ENCODE measurements at regions of chr15 and their contacts with region 1.

Region 1: DNA sequence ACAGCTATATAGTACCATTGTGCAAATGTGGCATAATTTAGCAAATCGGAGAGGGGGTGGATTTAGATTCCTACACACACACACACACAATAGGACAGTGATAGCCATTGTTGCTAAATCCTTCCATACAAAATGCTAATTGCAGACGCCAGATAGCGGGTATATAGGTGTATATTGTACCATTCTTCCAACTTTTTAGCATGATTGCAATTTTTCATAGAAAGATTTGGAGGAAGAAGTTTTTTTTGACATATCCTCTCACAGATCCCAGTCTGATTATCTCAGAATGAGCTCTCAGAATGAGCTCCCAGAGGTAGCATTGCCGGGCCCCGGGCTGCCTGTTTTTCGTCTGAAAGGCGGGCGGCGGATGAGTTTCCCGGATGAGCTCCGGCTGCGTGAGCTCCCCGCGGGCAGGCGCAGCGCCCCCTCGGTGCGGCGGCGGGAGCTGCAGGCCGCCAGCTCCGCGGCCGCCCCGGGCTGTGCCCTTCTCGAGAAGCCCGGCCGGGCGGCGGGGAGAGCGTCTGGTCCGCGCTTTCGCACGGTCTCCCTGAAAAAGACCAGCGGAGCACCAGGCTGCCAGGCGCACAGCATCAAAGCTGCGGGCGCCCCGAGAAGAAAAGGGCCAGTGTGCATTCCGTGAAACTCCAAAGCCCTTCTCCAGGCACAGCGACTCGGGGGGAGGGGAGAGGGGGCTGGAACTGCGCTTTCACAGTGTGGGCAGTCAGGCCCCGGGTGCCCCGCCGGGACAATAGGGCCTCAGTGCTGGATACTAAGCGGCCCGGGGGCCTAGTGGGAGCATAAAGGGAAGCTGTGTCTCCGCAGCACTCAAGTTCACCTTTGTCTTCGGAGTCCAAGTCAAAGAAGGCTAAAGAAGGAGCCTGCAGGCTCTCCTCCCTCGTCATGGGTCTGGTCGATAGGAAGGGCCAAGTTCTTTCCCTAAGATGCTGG is 12.0 kb upstream of the SHC4 start:
- DNase-seq: no peak
- H3K4me3 ChIP-seq: peak overlapping the region; percentile 57
- H3K27ac ChIP-seq: peak overlapping the region; percentile 21
- H3K27me3 ChIP-seq: no peaks in the 10 kb centered on the region
- CTCF ChIP-seq: peak; percentile 66

Region 2: GRCh38 chr15:48540756-48541155 is 435.0 kb before region 1 on chr15:
- CTCF ChIA-PET with region 1: no interaction called
- POLR2A ChIA-PET with region 1: no interaction called
- DNase-seq: no peak
- H3K4me3 ChIP-seq: no peak overlapping the region
- H3K27ac ChIP-seq: no peak overlapping the region
- H3K27me3 ChIP-seq: no peaks in the 10 kb centered on the region
- CTCF ChIP-seq: no peak

Region 3: DNA sequence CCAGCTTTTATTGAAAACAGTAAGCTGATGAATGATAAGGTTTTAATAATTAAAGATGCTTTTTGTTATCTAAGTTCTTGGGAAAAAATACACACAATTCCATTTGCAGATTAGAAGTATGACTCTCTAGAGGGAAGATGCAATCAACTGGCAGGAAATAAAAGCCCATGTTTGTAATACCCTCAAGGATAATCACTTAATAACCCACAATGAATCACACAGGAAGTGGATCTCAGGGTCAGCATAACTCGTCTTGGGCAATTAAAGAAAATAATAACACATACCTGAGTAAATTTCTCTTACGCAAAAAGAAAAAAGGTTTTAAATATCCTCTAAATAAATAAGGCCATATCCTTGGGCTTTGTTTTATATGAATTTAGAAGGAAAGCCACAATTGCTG is 107.2 kb before region 1 on chr15:
- CTCF ChIA-PET with region 1: interaction called, 102 read pairs
- POLR2A ChIA-PET with region 1: no interaction called
- DNase-seq: no peak
- H3K4me3 ChIP-seq: no peak overlapping the region
- H3K27ac ChIP-seq: no peak overlapping the region
- H3K27me3 ChIP-seq: no peaks in the 10 kb centered on the region
- CTCF ChIP-seq: no peak

Region 4: DNA sequence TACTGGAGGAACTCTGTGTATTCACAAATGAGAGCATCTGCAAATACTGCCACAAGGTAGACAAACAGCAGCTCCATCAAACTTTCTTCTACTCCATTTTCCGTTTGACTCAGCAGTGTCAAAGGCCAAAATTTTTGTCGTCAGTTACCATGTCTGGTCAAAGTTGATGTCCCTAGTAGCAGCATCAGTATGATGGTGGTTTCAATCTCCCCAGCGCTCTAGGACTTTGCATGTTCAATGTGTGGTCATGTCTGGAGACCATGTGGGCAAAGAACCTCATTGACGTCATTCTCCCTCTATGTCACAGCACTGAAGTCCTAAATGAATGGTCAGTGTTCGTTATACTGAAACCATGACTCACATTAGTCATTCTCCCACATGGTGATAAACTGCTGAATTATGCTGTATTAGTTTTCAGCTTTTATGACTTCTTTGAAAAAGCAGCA is 35.3 kb before region 1 on chr15:
- CTCF ChIA-PET with region 1: interaction called, 14 read pairs
- POLR2A ChIA-PET with region 1: interaction called, 4 read pairs
- DNase-seq: peak; percentile 92
- H3K4me3 ChIP-seq: no peak overlapping the region
- H3K27ac ChIP-seq: peak overlapping the region; percentile 77
- H3K27me3 ChIP-seq: no peaks in the 10 kb centered on the region
- CTCF ChIP-seq: no peak

Region 5: GRCh38 chr15:48992545-48992944 is 16.8 kb after region 1 on chr15:
- CTCF ChIA-PET with region 1: interaction called, 41 read pairs
- POLR2A ChIA-PET with region 1: no interaction called
- DNase-seq: no peak
- H3K4me3 ChIP-seq: no peak overlapping the region
- H3K27ac ChIP-seq: no peak overlapping the region
- H3K27me3 ChIP-seq: no peaks in the 10 kb centered on the region
- CTCF ChIP-seq: no peak

Region 6: GRCh38 chr15:49145651-49146609 is 170.2 kb after region 1 on chr15:
- CTCF ChIA-PET with region 1: interaction called, 13 read pairs
- POLR2A ChIA-PET with region 1: no interaction called
- DNase-seq: no peak
- H3K4me3 ChIP-seq: no peak overlapping the region
- H3K27ac ChIP-seq: no peak overlapping the region
- H3K27me3 ChIP-seq: no peaks in the 10 kb centered on the region
- CTCF ChIP-seq: peak; percentile 79

Measured in AG04450 (cell line).